ENCODE measurements at regions of chr19 and their contacts with region 1.

Region 1: GRCh38 chr19:13880059-13881043 is 3.4 kb downstream of the NANOS3 start:
- H3K4me3 Mint-ChIP-seq: peak overlapping the region; percentile 53
- H3K27ac Mint-ChIP-seq: peak overlapping the region; percentile 87
- H3K4me1 Mint-ChIP-seq: peaks cover 39% of the 10 kb centered on the region
- H3K27me3 Mint-ChIP-seq: peaks cover 23% of the 10 kb centered on the region

Region 2: GRCh38 chr19:13920940-13921761 is 40.8 kb after region 1 on chr19:
- intact Hi-C with region 1: no loop called
- H3K4me3 Mint-ChIP-seq: no peak overlapping the region
- H3K27ac Mint-ChIP-seq: no peak overlapping the region
- H3K4me1 Mint-ChIP-seq: peaks cover 3% of the 10 kb centered on the region
- H3K27me3 Mint-ChIP-seq: peaks cover 2% of the 10 kb centered on the region

Region 3: GRCh38 chr19:13952154-13953035 is 72.0 kb after region 1 on chr19 and contains the start of gene DCAF15:
- intact Hi-C with region 1: loop called (anchors 2 kb)
- H3K4me3 Mint-ChIP-seq: peak within 1 kb of the TSS; percentile 94
- H3K27ac Mint-ChIP-seq: peak within 1 kb of the TSS; percentile 90
- H3K4me1 Mint-ChIP-seq: peaks cover 27% of the 10 kb centered on the region
- H3K27me3 Mint-ChIP-seq: peaks cover 2% of the 10 kb centered on the region

Region 4: GRCh38 chr19:14048443-14049153 is 168.2 kb after region 1 on chr19:
- intact Hi-C with region 1: loop called (anchors 5 kb)
- H3K4me3 Mint-ChIP-seq: no peak overlapping the region
- H3K27ac Mint-ChIP-seq: no peak overlapping the region
- H3K4me1 Mint-ChIP-seq: peaks cover 7% of the 10 kb centered on the region
- H3K27me3 Mint-ChIP-seq: peaks cover 3% of the 10 kb centered on the region

Region 5: DNA sequence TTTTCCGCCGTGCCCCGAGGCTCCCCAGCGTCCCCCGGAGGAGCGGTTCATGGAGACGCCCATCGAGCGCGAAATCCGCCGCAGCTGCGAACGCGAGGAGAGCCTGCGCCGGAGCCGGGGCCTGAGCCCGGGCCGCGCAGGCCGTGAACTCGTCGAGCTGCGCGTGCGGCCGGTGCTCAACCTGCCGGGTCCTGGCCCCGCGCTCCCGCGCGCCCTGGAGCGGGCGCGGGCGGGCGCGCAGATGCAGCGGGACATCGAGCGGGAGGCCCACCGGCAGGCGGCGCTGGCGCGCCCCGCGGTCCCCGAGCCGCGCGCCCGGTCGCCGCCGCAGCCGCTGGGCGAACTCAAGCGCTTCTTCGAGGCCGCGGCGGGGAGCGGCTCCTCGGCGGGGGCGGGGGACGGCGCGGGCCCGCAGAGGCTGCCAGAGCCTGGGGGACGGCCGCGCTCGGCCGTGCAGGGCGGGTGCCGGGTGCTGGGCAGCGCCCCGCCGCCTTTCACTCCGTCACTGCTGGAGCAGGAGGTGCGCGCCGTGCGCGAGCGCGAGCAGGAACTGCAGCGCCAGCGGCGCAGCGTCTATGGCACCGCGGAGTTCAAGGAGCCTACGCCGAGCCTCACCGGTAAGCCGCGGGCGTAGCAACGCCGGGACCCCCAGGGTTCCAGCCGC is 193.0 kb after region 1 on chr19:
- intact Hi-C with region 1: loop called (anchors 5 kb)
- H3K4me3 Mint-ChIP-seq: peak overlapping the region; percentile 100
- H3K27ac Mint-ChIP-seq: peak overlapping the region; percentile 93
- H3K4me1 Mint-ChIP-seq: peaks cover 46% of the 10 kb centered on the region
- H3K27me3 Mint-ChIP-seq: peaks cover 36% of the 10 kb centered on the region